ENCODE measurements at regions of chr10 and their contacts with region 1.

Region 1: GRCh38 chr10:103019425-103019824 is 101.3 kb downstream of the CNNM2 start:
- DNase-seq: no peak
- H3K4me3 ChIP-seq: no peak overlapping the region
- H3K27ac ChIP-seq: no peak overlapping the region
- H3K4me1 ChIP-seq: peaks cover 0 to 6% of the 10 kb centered on the region in 2 donors
- H3K27me3 ChIP-seq: no peaks in the 10 kb centered on the region
- CTCF ChIP-seq: no peak

Region 2: DNA sequence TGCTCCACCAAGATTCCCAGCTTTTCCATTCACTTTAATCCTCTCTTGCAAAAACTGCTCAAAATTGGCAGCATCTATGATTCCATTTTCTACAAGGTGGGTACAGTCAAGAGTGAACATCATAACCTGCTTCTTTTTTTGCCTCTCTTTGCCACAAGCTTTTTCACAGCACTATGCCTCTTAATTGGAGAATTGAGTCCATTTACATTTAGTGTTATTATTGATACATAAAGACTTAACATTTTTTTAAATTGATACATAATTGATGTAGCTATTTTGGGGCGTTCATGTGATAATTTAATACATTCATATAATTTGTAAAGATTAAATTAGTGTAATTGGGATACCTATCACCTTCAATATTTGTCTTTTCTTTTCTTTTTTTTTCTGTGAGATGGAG is 131.4 kb before region 1 on chr10:
- intact Hi-C with region 1: no loop called
- DNase-seq: no peak
- H3K4me3 ChIP-seq: no peak overlapping the region
- H3K27ac ChIP-seq: no peak overlapping the region
- H3K4me1 ChIP-seq: no peaks in the 10 kb centered on the region
- H3K27me3 ChIP-seq: no peaks in the 10 kb centered on the region
- CTCF ChIP-seq: no peak

Region 3: GRCh38 chr10:102970497-102970896 is 48.9 kb before region 1 on chr10:
- intact Hi-C with region 1: loop called (anchors 5 kb)
- DNase-seq: no peak
- H3K4me3 ChIP-seq: no peak overlapping the region
- H3K27ac ChIP-seq: no peak overlapping the region
- H3K4me1 ChIP-seq: peaks cover 0 to 2% of the 10 kb centered on the region in 2 donors
- H3K27me3 ChIP-seq: no peaks in the 10 kb centered on the region
- CTCF ChIP-seq: no peak

Measured in ascending aorta (tissue), 2 donors.